ENCODE measurements at regions of chr1 and their contacts with region 1.

Region 1: DNA sequence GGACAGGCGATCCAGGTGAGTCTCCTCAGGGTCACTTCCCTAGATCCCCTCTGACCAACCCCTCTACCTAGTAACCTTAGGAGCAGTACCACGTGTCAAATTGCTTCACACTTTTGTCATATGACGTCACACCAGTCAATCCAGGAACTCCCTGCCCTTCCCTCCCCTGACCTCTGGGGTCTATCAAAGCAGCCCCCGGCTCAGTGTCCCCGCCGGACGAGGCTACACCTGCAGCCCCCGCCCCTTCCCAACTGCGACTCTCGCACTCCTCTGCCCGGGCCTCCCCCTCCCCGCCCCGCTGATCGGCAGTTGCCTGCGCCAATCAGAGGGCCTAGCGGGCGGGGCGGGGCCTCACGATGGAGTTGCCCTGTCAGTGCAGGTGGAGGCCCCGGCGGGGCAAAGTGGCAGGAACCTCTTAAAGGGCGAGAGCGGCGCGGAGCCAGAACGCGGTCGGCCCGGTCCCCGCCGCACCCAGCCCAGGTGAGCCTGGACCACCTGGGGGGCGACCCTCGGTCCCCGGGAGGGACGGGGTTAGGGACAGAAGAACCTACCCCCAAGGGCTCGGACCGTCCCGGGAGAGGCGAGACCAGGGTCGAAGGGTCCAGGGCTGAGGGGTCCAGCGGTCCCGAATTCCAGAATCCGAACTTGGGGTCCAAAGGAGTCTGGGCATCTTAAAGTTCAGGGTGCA is 27.5 kb upstream of the EPB41 start:
- DNase-seq: peak; percentile 86 to 96 (median 92)
- ATAC-seq: peak; percentile 81 to 89 (median 86)
- H3K4me3 ChIP-seq: peak overlapping the region; percentile 62 to 98 (median 86)
- H3K27ac ChIP-seq: peak overlapping the region; percentile 47 to 81 (median 70)
- H3K4me1 ChIP-seq: peaks cover 3 to 12% (median 5%) of the 10 kb centered on the region in 3 donors
- H3K27me3 ChIP-seq: no peaks in the 10 kb centered on the region
- CTCF ChIP-seq: no peak

Region 2: DNA sequence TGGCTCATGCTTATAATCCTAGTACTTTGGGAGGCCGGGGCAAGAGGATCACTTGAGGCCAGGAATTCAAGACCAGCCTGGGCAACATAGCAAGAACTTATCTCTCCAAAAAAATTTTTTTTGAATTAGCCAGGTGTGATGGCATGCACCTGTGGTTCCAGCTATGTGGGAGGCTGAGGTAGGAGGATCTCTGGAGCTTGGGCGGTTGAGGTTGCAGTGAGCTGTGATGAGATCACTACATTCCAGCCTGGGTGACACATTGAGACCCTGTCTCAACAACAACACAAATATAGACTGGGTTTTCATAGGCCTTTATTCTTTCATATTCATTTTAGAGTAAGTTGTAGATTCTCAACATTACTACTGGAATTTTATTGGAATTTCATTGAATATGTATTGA is 545.3 kb before region 1 on chr1:
- intact Hi-C with region 1: no loop called
- DNase-seq: no peak
- ATAC-seq: no peak
- H3K4me3 ChIP-seq: no peak overlapping the region
- H3K27ac ChIP-seq: no peak overlapping the region
- H3K4me1 ChIP-seq: no peaks in the 10 kb centered on the region
- H3K27me3 ChIP-seq: no peaks in the 10 kb centered on the region
- CTCF ChIP-seq: no peak

Region 3: DNA sequence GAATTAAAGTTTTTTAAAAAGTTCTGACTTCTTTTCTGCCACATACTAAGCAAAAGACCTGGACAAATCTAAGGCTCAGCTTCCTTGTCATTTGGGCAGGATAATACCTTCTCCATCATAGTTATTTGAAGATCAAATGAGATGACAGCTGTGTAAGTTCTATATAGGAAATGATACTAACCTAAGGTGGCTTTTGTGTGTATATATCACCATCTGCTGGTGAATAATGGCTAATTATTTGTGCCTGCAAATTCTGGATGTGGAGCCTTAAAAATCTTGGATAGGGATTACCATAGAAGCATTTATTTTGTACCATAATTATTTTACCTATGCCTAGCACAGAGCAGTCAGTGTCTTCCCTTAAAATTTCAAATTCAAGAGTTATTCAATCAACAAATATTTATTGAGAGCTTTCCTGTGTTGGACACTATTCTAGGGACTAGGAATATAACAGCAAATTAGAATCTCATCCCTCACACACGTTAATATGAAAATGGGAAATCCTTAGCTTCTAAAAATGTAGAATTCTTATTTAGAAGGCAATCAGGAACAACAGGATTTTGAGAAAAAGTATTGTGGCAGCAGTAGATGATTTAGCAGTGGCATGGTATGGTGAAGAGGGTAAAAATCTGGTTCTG is 147.1 kb after region 1 on chr1:
- intact Hi-C with region 1: loop called in 2 of 3 experiments (anchors 5 to 10 kb)
- DNase-seq: no peak
- ATAC-seq: peak in 3 of 4 donors; percentile 83 to 86 (median 83)
- H3K4me3 ChIP-seq: no peak overlapping the region
- H3K27ac ChIP-seq: no peak overlapping the region
- H3K4me1 ChIP-seq: no peaks in the 10 kb centered on the region
- H3K27me3 ChIP-seq: no peaks in the 10 kb centered on the region
- CTCF ChIP-seq: peak; percentile 6 to 43 (median 37)

Region 4: GRCh38 chr1:29197585-29197924 is 310.7 kb after region 1 on chr1:
- intact Hi-C with region 1: loop called in 2 of 3 experiments (anchors 5 to 10 kb)
- DNase-seq: no peak
- ATAC-seq: peak in 3 of 4 donors; percentile 56 to 82 (median 71)
- H3K4me3 ChIP-seq: no peak overlapping the region
- H3K27ac ChIP-seq: no peak overlapping the region
- H3K4me1 ChIP-seq: peaks cover 0 to 7% (median 4%) of the 10 kb centered on the region in 3 donors
- H3K27me3 ChIP-seq: no peaks in the 10 kb centered on the region
- CTCF ChIP-seq: no peak

Region 5: GRCh38 chr1:29202584-29203340 is 315.9 kb after region 1 on chr1:
- intact Hi-C with region 1: loop called in 2 of 3 experiments (anchors 5 to 10 kb)
- DNase-seq: peak; percentile 88 to 100 (median 96)
- ATAC-seq: peak; percentile 96 to 99 (median 98)
- H3K4me3 ChIP-seq: no peak overlapping the region
- H3K27ac ChIP-seq: peak overlapping the region in 2 of 4 donors; percentile 39 to 42
- H3K4me1 ChIP-seq: peaks cover 0 to 9% (median 4%) of the 10 kb centered on the region in 3 donors
- H3K27me3 ChIP-seq: no peaks in the 10 kb centered on the region
- CTCF ChIP-seq: peak; percentile 95 to 99 (median 97)

Measured in pancreas (tissue), 10 donors.